ENCODE measurements at regions of chr9 and their contacts with region 1.

Region 1: GRCh38 chr9:32378993-32379729 is 5.3 kb upstream of the ACO1 start:
- DNase-seq: peak in 24 of 42 donors; percentile 8 to 79 (median 53)

Region 2: GRCh38 chr9:32319312-32319929 is 59.7 kb before region 1 on chr9:
- intact Hi-C with region 1: no loop called
- DNase-seq: no peak

Region 3: GRCh38 chr9:32579706-32580331 is 200.7 kb after region 1 on chr9:
- intact Hi-C with region 1: loop called (anchors 2 kb)
- DNase-seq: peak; percentile 26 to 92 (median 82)

Region 4: GRCh38 chr9:32970554-32970953 is 591.4 kb after region 1 on chr9:
- intact Hi-C with region 1: loop called (anchors 5 kb)
- DNase-seq: no peak